Caco-2 (cell line): ENCODE measurements at regions of chr17 and their contacts with region 1.

Region 1: GRCh38 chr17:42577532-42578281 is at the start of gene PSMC3IP:
- DNase-seq: peak; percentile 95 to 97
- H3K4me3 ChIP-seq: peak within 1 kb of the TSS; percentile 82
- H3K4me3 Mint-ChIP-seq: peak within 1 kb of the TSS; percentile 80
- H3K27ac Mint-ChIP-seq: peak within 1 kb of the TSS; percentile 84
- H3K4me1 ChIP-seq: peaks cover 4% of the 10 kb centered on the region
- H3K4me1 Mint-ChIP-seq: peaks cover 23% of the 10 kb centered on the region
- H3K27me3 ChIP-seq: no peaks in the 10 kb centered on the region
- H3K27me3 Mint-ChIP-seq: no peaks in the 10 kb centered on the region
- CTCF ChIP-seq: peak; percentile 59 to 64
- total RNA-seq, gene PSMC3IP: 24.7 and 25.2 TPM in 2 replicates

Region 2: GRCh38 chr17:42517516-42517915 is 60.2 kb before region 1 on chr17:
- CTCF ChIA-PET with region 1: interaction called, 11 read pairs
- POLR2A ChIA-PET with region 1: no interaction called
- intact Hi-C with region 1: no loop called
- DNase-seq: peak; percentile 82 to 89
- H3K4me3 ChIP-seq: no peak overlapping the region
- H3K4me3 Mint-ChIP-seq: no peak overlapping the region
- H3K27ac Mint-ChIP-seq: peak overlapping the region; percentile 90
- H3K4me1 ChIP-seq: peaks cover 51% of the 10 kb centered on the region
- H3K4me1 Mint-ChIP-seq: peaks cover 46% of the 10 kb centered on the region
- H3K27me3 ChIP-seq: no peaks in the 10 kb centered on the region
- H3K27me3 Mint-ChIP-seq: no peaks in the 10 kb centered on the region
- CTCF ChIP-seq: peak; percentile 90 to 97

Region 3: DNA sequence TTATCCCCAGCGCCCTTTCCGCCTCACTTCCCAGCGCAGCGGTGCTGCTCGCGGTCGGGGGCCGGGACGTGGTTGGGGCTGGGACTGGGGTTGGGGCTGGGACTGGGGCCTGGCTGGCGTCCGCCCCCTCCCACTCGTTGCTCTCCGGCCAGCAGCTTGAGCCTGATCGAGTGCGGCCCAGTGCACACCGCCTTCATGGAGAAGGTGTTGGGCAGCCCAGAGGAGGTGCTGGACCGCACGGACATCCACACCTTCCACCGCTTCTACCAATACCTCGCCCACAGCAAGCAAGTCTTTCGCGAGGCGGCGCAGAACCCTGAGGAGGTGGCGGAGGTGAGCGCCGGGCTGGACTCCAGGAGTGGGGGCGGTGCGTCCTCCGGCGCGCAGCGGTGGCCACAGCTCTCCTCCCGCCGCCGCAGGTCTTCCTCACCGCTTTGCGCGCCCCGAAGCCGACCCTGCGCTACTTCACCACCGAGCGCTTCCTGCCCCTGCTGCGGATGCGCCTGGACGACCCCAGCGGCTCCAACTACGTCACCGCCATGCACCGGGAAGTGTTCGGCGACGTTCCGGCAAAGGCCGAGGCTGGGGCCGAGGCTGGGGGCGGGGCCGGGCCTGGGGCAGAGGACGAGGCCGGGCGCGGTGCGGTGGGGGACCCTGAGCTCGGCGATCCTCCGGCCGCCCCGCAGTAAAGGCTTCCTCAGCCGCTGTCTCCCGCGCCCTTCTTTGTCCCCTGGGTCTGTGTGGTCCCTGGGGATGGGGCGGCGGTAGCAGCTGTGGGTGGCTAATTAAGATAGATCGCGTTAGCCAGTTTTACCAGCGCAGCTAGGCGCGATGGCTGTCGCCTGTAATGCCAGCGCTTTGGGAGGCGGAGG is 23.2 kb before region 1 on chr17:
- CTCF ChIA-PET with region 1: interaction called, 12 read pairs
- POLR2A ChIA-PET with region 1: no interaction called
- intact Hi-C with region 1: no loop called
- DNase-seq: peak; percentile 88 to 93
- H3K4me3 ChIP-seq: peak overlapping the region; percentile 88
- H3K4me3 Mint-ChIP-seq: peak overlapping the region; percentile 97
- H3K27ac Mint-ChIP-seq: peak overlapping the region; percentile 94
- H3K4me1 ChIP-seq: peaks cover 8% of the 10 kb centered on the region; the same call in 1 of the 2 replicates
- H3K4me1 Mint-ChIP-seq: peaks cover 8% of the 10 kb centered on the region
- H3K27me3 ChIP-seq: no peaks in the 10 kb centered on the region
- H3K27me3 Mint-ChIP-seq: no peaks in the 10 kb centered on the region
- CTCF ChIP-seq: no peak

Region 4: DNA sequence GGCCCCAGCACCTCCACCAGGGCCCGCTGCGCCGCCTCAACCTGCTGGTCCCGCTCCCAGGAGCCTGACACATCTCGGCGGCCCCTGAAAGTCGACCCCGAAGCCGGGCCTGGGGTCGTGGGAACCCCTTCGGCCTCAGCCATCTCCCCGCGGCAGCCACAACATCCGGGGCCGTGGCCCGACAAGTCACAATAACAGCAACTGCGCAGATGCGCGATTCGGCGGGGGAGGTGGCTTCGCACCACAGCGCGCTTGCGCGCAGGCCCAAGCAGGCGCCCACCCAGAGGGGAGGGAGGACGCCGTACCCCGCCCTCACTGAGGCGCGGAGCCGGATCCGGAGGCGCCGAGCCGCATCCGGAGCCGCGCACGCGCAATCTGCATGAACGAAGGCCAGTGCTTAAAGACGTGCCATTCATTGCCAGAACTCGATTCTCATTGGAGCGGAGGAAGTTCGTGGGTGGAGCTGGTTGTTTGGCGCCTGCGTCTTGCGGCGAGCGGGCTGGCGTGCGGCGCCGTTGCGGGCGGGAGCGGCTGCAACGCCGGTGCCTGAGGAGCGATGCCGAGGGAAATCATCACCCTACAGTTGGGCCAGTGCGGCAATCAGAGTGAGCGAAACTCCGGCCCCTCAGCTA is 31.6 kb after region 1 on chr17 and contains the starts of genes RETREG3 and TUBG1:
- CTCF ChIA-PET with region 1: interaction called, 37 read pairs
- POLR2A ChIA-PET with region 1: interaction called, 26 read pairs
- intact Hi-C with region 1: loop called (anchors 2 kb)
- DNase-seq: peak; percentile 99
- H3K4me3 ChIP-seq: peak within 1 kb of the TSS; percentile 72
- H3K4me3 Mint-ChIP-seq: peak within 1 kb of the TSS; percentile 90
- H3K27ac Mint-ChIP-seq: peak within 1 kb of the TSS; percentile 77
- H3K4me1 ChIP-seq: peaks cover 6% of the 10 kb centered on the region; the same call in 1 of the 2 replicates
- H3K4me1 Mint-ChIP-seq: peaks cover 13% of the 10 kb centered on the region
- H3K27me3 ChIP-seq: no peaks in the 10 kb centered on the region
- H3K27me3 Mint-ChIP-seq: no peaks in the 10 kb centered on the region
- CTCF ChIP-seq: peak; percentile 21 to 51
- total RNA-seq, gene RETREG3: 58.6 and 59.0 TPM in 2 replicates
- total RNA-seq, gene TUBG1: 108 and 112 TPM in 2 replicates

Region 5: GRCh38 chr17:42677008-42677857 is 99.5 kb after region 1 on chr17:
- CTCF ChIA-PET with region 1: interaction called, 38 read pairs
- POLR2A ChIA-PET with region 1: interaction called, 6 read pairs
- intact Hi-C with region 1: loop called (anchors 1 kb)
- DNase-seq: peak; percentile 99 to 100
- H3K4me3 ChIP-seq: peak overlapping the region; percentile 85
- H3K4me3 Mint-ChIP-seq: peak overlapping the region; percentile 89
- H3K27ac Mint-ChIP-seq: peak overlapping the region; percentile 95
- H3K4me1 ChIP-seq: peaks cover 26% of the 10 kb centered on the region
- H3K4me1 Mint-ChIP-seq: peaks cover 8% of the 10 kb centered on the region
- H3K27me3 ChIP-seq: no peaks in the 10 kb centered on the region
- H3K27me3 Mint-ChIP-seq: no peaks in the 10 kb centered on the region
- CTCF ChIP-seq: no peak